ENCODE measurements at regions of chr11 and their contacts with region 1.

Region 1: DNA sequence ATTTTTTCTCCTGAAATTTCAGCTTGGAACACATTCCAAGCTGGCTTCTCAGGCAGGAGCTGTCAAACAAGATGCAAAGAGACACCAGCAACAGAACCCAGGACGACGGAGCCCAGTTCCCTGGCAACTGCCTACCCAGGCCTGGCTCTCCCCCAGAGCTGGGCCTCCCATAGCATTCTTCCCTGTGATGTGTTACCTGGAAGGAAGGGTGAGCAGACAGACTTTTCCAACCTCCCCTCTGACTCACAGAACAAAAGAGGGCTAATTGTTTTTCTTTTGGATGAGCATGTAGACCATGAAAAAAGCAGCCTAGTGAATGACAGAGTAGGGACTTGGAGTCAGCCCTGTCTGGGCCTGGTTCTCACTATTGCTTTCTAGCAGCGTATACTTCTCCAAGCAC is 55.3 kb upstream of the BMAL1 start:
- DNase-seq: peak; percentile 31
- ATAC-seq: peak; percentile 45; the same call in 1 of the 2 replicates
- H3K4me3 ChIP-seq: no peak overlapping the region
- H3K27ac ChIP-seq: no peak overlapping the region
- H3K4me1 ChIP-seq: peaks cover 13% of the 10 kb centered on the region
- H3K27me3 ChIP-seq: no peaks in the 10 kb centered on the region
- CTCF ChIP-seq: no peak
- POLR2A ChIP-seq: no peak
- RAD21 ChIP-seq: no peak

Region 2: GRCh38 chr11:12973528-12974181 is 248.6 kb before region 1 on chr11:
- CTCF ChIA-PET with region 1: no interaction called
- POLR2A ChIA-PET with region 1: no interaction called
- dilution Hi-C with region 1: no loop called
- in situ Hi-C with region 1: no loop called
- intact Hi-C with region 1: no loop called
- DNase-seq: no peak
- ATAC-seq: no peak
- H3K4me3 ChIP-seq: no peak overlapping the region
- H3K27ac ChIP-seq: no peak overlapping the region
- H3K4me1 ChIP-seq: no peaks in the 10 kb centered on the region
- H3K27me3 ChIP-seq: peaks cover 47% of the 10 kb centered on the region
- CTCF ChIP-seq: no peak
- POLR2A ChIP-seq: no peak
- RAD21 ChIP-seq: no peak

Region 3: GRCh38 chr11:13269775-13270174 is 47.5 kb after region 1 on chr11:
- CTCF ChIA-PET with region 1: no interaction called
- POLR2A ChIA-PET with region 1: no interaction called
- dilution Hi-C with region 1: no loop called
- in situ Hi-C with region 1: loop called (anchors 5 kb)
- intact Hi-C with region 1: no loop called
- DNase-seq: peak; percentile 46
- ATAC-seq: no peak
- H3K4me3 ChIP-seq: no peak overlapping the region
- H3K27ac ChIP-seq: no peak overlapping the region
- H3K4me1 ChIP-seq: no peaks in the 10 kb centered on the region
- H3K27me3 ChIP-seq: peaks cover 2% of the 10 kb centered on the region; the same call in 1 of the 2 replicates
- CTCF ChIP-seq: no peak
- POLR2A ChIP-seq: no peak
- RAD21 ChIP-seq: no peak

Measured in IMR-90 (cell line).